ENCODE measurements at regions of chr10 and their contacts with region 1.

Region 1: DNA sequence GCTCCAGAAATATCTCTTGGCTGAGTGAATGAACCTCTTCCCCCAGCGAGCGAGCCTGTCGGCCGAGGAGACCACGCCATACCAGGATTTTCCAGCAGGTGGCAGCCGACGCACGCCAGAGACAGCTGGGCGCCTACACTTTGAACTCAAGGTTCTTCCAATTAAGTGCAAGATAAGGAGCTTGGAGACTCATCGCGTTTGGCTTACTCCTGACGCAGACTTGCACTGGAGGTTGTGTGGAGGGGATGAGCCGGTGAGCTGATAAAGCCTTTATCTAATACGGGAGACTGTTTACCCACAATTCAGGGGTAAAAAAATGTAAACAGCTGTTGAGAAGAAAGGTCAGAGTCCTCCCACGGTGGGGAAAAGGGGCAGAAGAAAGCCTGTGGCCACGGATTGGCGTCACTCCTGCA is 45.9 kb upstream of the EMX2 start:
- DNase-seq: peak; percentile 38 to 53
- ATAC-seq: peak; percentile 84 to 85
- H3K4me3 ChIP-seq: no peak overlapping the region
- H3K27ac ChIP-seq: no peak overlapping the region
- H3K4me1 ChIP-seq: no peaks in the 10 kb centered on the region
- H3K27me3 ChIP-seq: peaks cover 0 to 2% (median 0%) of the 10 kb centered on the region in 3 donors
- CTCF ChIP-seq: peak; percentile 85 to 97 (median 89)
- POLR2A ChIP-seq: no peak

Region 2: GRCh38 chr10:117365612-117366011 is 131.0 kb before region 1 on chr10:
- in situ Hi-C with region 1: no loop called
- intact Hi-C with region 1: no loop called
- DNase-seq: no peak
- ATAC-seq: no peak
- H3K4me3 ChIP-seq: no peak overlapping the region
- H3K27ac ChIP-seq: no peak overlapping the region
- H3K4me1 ChIP-seq: peaks cover 0 to 28% of the 10 kb centered on the region in 2 donors
- H3K27me3 ChIP-seq: no peaks in the 10 kb centered on the region
- CTCF ChIP-seq: no peak
- POLR2A ChIP-seq: no peak

Region 3: GRCh38 chr10:118241229-118242137 is 744.9 kb after region 1 on chr10:
- in situ Hi-C with region 1: loop called (anchors 5 to 10 kb)
- intact Hi-C with region 1: loop called (anchors 1 kb)
- DNase-seq: peak; percentile 37 to 63
- ATAC-seq: peak; percentile 60 to 87
- H3K4me3 ChIP-seq: no peak overlapping the region
- H3K27ac ChIP-seq: no peak overlapping the region
- H3K4me1 ChIP-seq: no peaks in the 10 kb centered on the region
- H3K27me3 ChIP-seq: peaks cover 25 to 48% (median 47%) of the 10 kb centered on the region in 3 donors
- CTCF ChIP-seq: peak; percentile 71 to 93 (median 83)
- POLR2A ChIP-seq: no peak

Region 4: GRCh38 chr10:118459726-118460193 is 963.1 kb after region 1 on chr10:
- in situ Hi-C with region 1: loop called in 2 of 4 experiments (anchors 25 kb)
- intact Hi-C with region 1: no loop called
- DNase-seq: peak in 1 of 2 donors; percentile 28
- ATAC-seq: peak; percentile 65 to 76
- H3K4me3 ChIP-seq: no peak overlapping the region
- H3K27ac ChIP-seq: no peak overlapping the region
- H3K4me1 ChIP-seq: no peaks in the 10 kb centered on the region
- H3K27me3 ChIP-seq: peaks cover 0 to 2% (median 0%) of the 10 kb centered on the region in 3 donors
- CTCF ChIP-seq: peak in 4 of 5 experiments; percentile 33 to 69 (median 51)
- POLR2A ChIP-seq: no peak

Measured in gastrocnemius medialis (tissue), 4 donors.